CD8-positive, alpha-beta T cell (primary cell): ENCODE measurements at regions of chr3 and their contacts with region 1.

Region 1: GRCh38 chr3:97971677-97972567 is at the start of gene RIOX2:
- DNase-seq: peak; percentile 48 to 87 (median 74)
- ATAC-seq: peak; percentile 91
- H3K4me3 ChIP-seq: peak within 1 kb of the TSS; percentile 44 to 61
- H3K4me3 Mint-ChIP-seq: peak within 1 kb of the TSS; percentile 93
- H3K27ac ChIP-seq: peak within 1 kb of the TSS; percentile 55 to 57
- H3K27ac Mint-ChIP-seq: peak within 1 kb of the TSS; percentile 94
- H3K4me1 ChIP-seq: peaks cover 31% of the 10 kb centered on the region
- H3K4me1 Mint-ChIP-seq: peaks cover 56% of the 10 kb centered on the region
- H3K27me3 ChIP-seq: no peaks in the 10 kb centered on the region
- H3K27me3 Mint-ChIP-seq: no peaks in the 10 kb centered on the region
- CTCF ChIP-seq: no peak
- total RNA-seq, gene RIOX2: 12.1 to 12.2 TPM

Region 2: DNA sequence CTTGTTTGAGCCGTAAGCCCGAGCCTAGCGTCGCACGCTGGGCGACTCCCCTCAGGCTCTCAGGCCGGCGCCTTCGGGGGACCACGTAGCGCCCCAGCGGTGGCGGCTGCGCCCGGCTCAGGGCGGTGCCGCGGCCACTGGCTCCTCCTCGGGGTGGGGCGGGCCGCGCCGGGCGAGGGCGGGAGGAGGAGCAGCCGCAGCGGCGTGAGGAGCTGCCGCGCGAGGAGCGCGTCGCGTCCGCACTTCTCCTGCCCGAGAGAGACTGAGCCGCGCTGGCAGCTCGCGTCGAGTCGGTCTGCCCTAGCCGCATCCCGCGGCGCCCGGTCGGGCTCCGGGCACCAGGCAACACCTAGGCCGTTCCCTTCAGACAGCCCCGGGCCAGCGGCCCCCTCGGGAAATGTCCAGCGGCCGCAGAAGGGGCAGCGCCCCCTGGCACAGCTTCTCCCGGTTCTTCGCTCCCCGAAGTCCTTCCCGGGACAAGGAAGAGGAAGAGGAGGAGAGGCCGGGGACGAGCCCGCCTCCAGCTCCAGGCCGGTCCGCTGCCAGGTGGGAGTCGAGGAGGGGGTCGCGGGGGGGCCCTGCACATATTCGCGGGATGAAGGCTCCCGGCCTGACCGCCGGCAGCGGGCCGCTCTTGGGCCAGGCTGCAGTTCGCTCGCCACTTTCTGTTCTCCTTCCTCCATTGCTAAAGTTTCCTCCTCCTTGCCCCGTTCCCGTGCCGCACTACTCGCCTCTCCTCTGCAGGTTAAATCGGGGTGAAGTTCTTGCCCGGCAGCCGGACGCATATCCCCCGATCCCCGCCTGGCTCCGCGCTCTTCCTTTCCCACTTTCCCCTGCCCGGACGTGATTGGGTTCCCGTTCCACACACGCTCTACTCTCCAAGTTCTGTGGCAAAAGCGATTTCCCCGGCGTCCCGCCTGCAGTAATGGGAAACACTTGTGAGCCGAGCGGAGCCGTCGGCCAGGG is 149.8 kb before region 1 on chr3 and contains the start of gene CRYBG3:
- CTCF ChIA-PET with region 1: interaction called, 4 read pairs
- POLR2A ChIA-PET with region 1: interaction called, 6 read pairs
- intact Hi-C with region 1: loop called (anchors 1 to 2 kb)
- DNase-seq: peak; percentile 63 to 90 (median 78)
- ATAC-seq: peak; percentile 98
- H3K4me3 ChIP-seq: peak within 1 kb of the TSS; percentile 61 to 75
- H3K4me3 Mint-ChIP-seq: peak within 1 kb of the TSS; percentile 95
- H3K27ac ChIP-seq: peak within 1 kb of the TSS; percentile 11 to 28
- H3K27ac Mint-ChIP-seq: peak within 1 kb of the TSS; percentile 81
- H3K4me1 ChIP-seq: peaks cover 11% of the 10 kb centered on the region
- H3K4me1 Mint-ChIP-seq: peaks cover 21% of the 10 kb centered on the region
- H3K27me3 ChIP-seq: no peaks in the 10 kb centered on the region
- H3K27me3 Mint-ChIP-seq: peaks cover 13% of the 10 kb centered on the region
- CTCF ChIP-seq: no peak
- total RNA-seq, gene CRYBG3: 1.00 to 1.1 TPM

Region 3: GRCh38 chr3:97910931-97911351 is 61.0 kb before region 1 on chr3:
- CTCF ChIA-PET with region 1: no interaction called
- POLR2A ChIA-PET with region 1: no interaction called
- intact Hi-C with region 1: loop called in 1 of 2 experiments (anchors 1 kb)
- DNase-seq: peak in 5 of 9 experiments; percentile 2 to 71 (median 49)
- ATAC-seq: peak; percentile 75
- H3K4me3 ChIP-seq: peak overlapping the region; percentile 10 to 24
- H3K4me3 Mint-ChIP-seq: peak overlapping the region; percentile 82
- H3K27ac ChIP-seq: peak overlapping the region; percentile 45 to 59
- H3K27ac Mint-ChIP-seq: peak overlapping the region; percentile 94
- H3K4me1 ChIP-seq: peaks cover 18% of the 10 kb centered on the region
- H3K4me1 Mint-ChIP-seq: peaks cover 17% of the 10 kb centered on the region
- H3K27me3 ChIP-seq: no peaks in the 10 kb centered on the region
- H3K27me3 Mint-ChIP-seq: no peaks in the 10 kb centered on the region
- CTCF ChIP-seq: no peak

Region 4: GRCh38 chr3:98573181-98573728 is 601.3 kb after region 1 on chr3:
- CTCF ChIA-PET with region 1: no interaction called
- POLR2A ChIA-PET with region 1: no interaction called
- intact Hi-C with region 1: loop called in 1 of 2 experiments (anchors 5 kb)
- DNase-seq: peak in 2 of 9 experiments; percentile 50 to 66
- ATAC-seq: peak; percentile 61
- H3K4me3 ChIP-seq: no peak overlapping the region
- H3K4me3 Mint-ChIP-seq: peak overlapping the region; percentile 16
- H3K27ac ChIP-seq: no peak overlapping the region
- H3K27ac Mint-ChIP-seq: peak overlapping the region; percentile 78
- H3K4me1 ChIP-seq: peaks cover 7% of the 10 kb centered on the region
- H3K4me1 Mint-ChIP-seq: peaks cover 31% of the 10 kb centered on the region
- H3K27me3 ChIP-seq: no peaks in the 10 kb centered on the region
- H3K27me3 Mint-ChIP-seq: no peaks in the 10 kb centered on the region
- CTCF ChIP-seq: peak; percentile 71

Region 5: GRCh38 chr3:98901392-98902350 is 929.7 kb after region 1 on chr3 and contains the start of gene DCBLD2:
- CTCF ChIA-PET with region 1: no interaction called
- POLR2A ChIA-PET with region 1: no interaction called
- intact Hi-C with region 1: loop called (anchors 5 to 10 kb)
- DNase-seq: peak; percentile 75 to 96 (median 87)
- ATAC-seq: peak; percentile 97
- H3K4me3 ChIP-seq: peak within 1 kb of the TSS; percentile 62 to 91
- H3K4me3 Mint-ChIP-seq: peak within 1 kb of the TSS; percentile 94
- H3K27ac ChIP-seq: peak within 1 kb of the TSS; percentile 37 to 46
- H3K27ac Mint-ChIP-seq: peak within 1 kb of the TSS; percentile 73
- H3K4me1 ChIP-seq: peaks cover 15% of the 10 kb centered on the region
- H3K4me1 Mint-ChIP-seq: peaks cover 24% of the 10 kb centered on the region
- H3K27me3 ChIP-seq: no peaks in the 10 kb centered on the region
- H3K27me3 Mint-ChIP-seq: peaks cover 11% of the 10 kb centered on the region
- CTCF ChIP-seq: no peak
- total RNA-seq, gene DCBLD2: 1.6 to 1.8 TPM